ENCODE measurements at regions of chr17 and their contacts with region 1.

Region 1: DNA sequence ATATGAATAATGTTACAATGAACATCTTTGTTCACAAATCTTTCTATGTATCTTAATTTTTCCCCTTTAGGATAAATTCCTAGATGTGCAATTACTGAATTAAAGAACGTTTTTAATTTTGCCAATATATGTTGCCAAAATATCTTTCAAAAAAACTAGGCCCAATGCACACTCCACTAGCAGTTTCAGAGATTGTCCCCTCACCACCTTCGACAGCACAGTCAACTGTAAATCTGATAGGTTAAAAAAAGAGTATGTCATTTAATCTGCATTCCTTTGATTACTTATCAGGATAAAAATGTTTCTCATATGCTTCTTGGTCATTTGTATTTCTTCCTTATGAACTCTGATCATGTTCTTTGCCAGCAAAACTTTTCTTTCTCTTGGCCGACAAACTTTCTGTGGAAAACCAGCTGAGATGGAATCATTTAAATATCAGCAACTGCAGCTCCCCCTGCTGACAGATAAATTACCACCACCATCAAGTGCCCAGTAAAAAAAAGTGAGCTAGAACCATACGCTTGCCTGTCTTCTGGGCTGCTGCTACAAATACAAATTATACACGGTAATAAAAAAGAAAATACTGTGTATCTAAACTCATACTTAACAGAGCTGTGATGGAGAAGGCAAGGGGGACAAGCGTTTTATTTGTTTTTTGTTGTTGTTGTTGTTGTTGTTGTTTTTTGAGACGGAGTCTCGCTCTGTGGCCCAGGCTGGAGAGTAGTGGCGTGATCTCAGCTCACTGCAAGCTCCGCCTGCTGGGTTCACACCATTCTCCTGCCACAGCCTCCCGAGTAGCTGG is 19.6 kb upstream of the KANSL1 start:
- DNase-seq: peak; percentile 48
- ATAC-seq: peak; percentile 89
- H3K4me3 ChIP-seq: no peak overlapping the region
- H3K27ac ChIP-seq: no peak overlapping the region
- H3K4me1 ChIP-seq: no peaks in the 10 kb centered on the region
- H3K27me3 ChIP-seq: no peaks in the 10 kb centered on the region
- CTCF ChIP-seq: peak; percentile 76 to 91 (median 83); a peak in 5 of 6 replicates
- POLR2A ChIP-seq: no peak
- RAD21 ChIP-seq: peak; percentile 74

Region 2: DNA sequence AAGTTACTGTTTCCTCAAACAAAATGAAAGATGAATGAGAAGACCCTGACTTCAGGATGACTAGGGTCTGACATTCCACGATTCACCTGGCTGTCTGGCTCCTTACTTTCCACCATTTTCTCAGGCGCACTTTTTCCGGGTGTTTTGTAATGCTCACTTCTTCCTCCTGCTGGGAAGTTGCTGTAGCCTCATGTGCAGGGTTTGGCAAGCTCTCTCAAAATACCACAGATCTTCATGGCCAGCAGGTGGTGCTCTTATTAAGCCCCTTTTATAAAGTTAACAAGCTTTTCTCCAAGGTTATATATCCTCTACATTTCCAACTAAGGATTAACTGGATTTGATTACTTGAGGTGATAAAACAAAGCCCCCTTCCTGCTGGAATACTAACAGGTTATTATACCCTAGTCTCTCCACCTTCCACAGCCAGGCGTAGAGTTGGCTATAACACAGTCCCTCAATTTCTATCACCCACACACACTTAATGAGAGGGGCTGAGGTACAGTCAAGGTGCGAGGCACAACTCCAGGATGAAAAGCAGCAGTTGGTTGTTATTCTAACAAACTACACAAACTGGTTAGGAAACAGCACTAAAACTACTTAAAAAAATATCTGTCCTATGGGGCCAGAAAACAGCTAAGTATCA is 168.4 kb before region 1 on chr17:
- CTCF ChIA-PET with region 1: interaction called, 38 read pairs
- POLR2A ChIA-PET with region 1: interaction called, 3 read pairs
- RAD21 ChIA-PET with region 1: interaction called in 1 of 2 experiments, 3 read pairs
- intact Hi-C with region 1: loop called (anchors 2 kb)
- DNase-seq: peak; percentile 75
- ATAC-seq: peak; percentile 94
- H3K4me3 ChIP-seq: no peak overlapping the region
- H3K27ac ChIP-seq: no peak overlapping the region
- H3K4me1 ChIP-seq: peaks cover 0 to 9% of the 10 kb centered on the region in 2 experiments; a peak in 2 of 4 replicates
- H3K27me3 ChIP-seq: no peaks in the 10 kb centered on the region
- CTCF ChIP-seq: peak; percentile 94 to 99 (median 98)
- POLR2A ChIP-seq: no peak
- RAD21 ChIP-seq: peak; percentile 84

Region 3: GRCh38 chr17:46199379-46199778 is 13.5 kb before region 1 on chr17:
- CTCF ChIA-PET with region 1: interaction called, 15 read pairs
- POLR2A ChIA-PET with region 1: no interaction called
- RAD21 ChIA-PET with region 1: no interaction called
- intact Hi-C with region 1: no loop called
- DNase-seq: no peak
- ATAC-seq: no peak
- H3K4me3 ChIP-seq: no peak overlapping the region
- H3K27ac ChIP-seq: no peak overlapping the region
- H3K4me1 ChIP-seq: peaks cover 4 to 12% of the 10 kb centered on the region in 2 experiments; a peak in 3 of 4 replicates
- H3K27me3 ChIP-seq: no peaks in the 10 kb centered on the region
- CTCF ChIP-seq: no peak
- POLR2A ChIP-seq: no peak
- RAD21 ChIP-seq: no peak

Region 4: DNA sequence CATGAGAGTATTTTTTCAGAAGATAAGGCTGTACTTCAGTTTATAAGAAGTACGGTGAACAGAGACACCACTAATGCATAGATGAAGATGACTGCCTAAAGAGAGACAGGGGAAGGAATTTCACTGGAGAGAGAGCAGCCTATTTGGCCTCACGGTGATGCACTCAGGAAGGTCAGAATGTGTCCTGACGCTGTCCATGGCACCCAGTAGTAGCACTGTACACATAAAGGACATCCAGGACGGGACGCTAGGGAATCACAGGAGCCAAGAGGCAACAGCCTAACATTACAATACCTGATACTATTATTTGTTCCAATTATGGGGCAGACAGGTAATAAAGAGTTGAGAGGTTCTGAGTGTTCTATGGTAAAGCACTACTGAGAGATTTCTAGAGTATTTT is 57.2 kb after region 1 on chr17:
- CTCF ChIA-PET with region 1: no interaction called
- POLR2A ChIA-PET with region 1: no interaction called
- RAD21 ChIA-PET with region 1: no interaction called
- intact Hi-C with region 1: no loop called
- DNase-seq: no peak
- ATAC-seq: no peak
- H3K4me3 ChIP-seq: no peak overlapping the region
- H3K27ac ChIP-seq: no peak overlapping the region
- H3K4me1 ChIP-seq: peaks cover 3 to 19% of the 10 kb centered on the region in 2 experiments; a peak in 3 of 4 replicates
- H3K27me3 ChIP-seq: no peaks in the 10 kb centered on the region
- CTCF ChIP-seq: no peak
- POLR2A ChIP-seq: no peak
- RAD21 ChIP-seq: no peak

Measured in HCT116 (cell line).